Dorsolateral prefrontal cortex (tissue), 120 donors: ENCODE measurements at regions of chr7 and their contacts with region 1.

Region 1: GRCh38 chr7:149662591-149663095 is 110.7 kb downstream of the ZNF467 start:
- DNase-seq: peak; percentile 42 to 79 (median 55)
- H3K4me3 ChIP-seq: no peak overlapping the region
- H3K27ac ChIP-seq: peak overlapping the region in 1 of 59 donors; percentile 18
- H3K27me3 ChIP-seq: no peaks in the 10 kb centered on the region
- CTCF ChIP-seq: peak in 54 of 56 donors; percentile 11 to 81 (median 55)

Region 2: DNA sequence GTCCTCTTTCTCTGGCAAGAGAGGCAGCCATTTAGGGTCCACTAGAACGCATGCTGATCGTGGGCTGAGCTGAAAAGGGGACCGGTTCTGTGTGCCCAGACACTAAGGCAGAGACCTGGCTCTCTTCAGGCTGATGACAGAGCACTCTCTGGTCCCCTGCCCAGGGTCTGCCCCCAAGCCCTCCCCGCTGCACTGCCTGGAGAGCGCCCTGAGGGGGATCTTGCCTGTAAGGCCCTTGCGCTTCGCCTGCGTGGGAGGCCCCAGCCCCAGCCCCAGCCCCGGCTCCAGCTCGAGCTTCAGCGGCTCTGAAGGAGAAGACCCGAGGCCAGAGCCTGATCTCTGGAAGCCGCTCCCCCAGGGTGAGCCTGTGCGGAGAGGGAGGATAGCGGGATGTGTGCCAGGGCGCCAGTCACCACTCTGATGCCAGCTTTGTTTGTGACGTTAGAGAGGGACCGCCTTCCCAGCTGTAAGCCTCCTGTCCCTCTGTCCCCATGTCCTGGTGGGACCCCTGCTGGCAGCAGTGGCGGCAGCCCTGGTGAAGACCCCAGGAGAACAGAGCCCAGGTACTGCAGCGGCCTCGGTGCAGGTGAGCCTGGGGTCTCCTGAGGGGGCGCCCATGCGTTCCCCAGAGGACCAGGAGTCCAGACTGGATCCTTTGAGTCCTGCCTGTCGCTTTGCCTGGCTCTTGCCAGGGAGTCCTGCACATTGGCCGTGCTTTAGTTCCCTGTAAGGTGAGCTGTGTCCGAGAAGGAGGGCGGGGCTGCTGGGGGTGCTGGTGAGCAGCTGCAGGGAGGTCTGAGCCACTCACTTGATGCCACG is 67.5 kb after region 1 on chr7:
- intact Hi-C with region 1: loop called in 1 of 2 experiments (anchors 5 kb)
- DNase-seq: peak in 9 of 10 donors; percentile 59 to 84 (median 67)
- H3K4me3 ChIP-seq: peak overlapping the region in 2 of 59 donors; percentile 13 to 14
- H3K27ac ChIP-seq: peak overlapping the region in 49 of 59 donors; percentile 1 to 85 (median 63)
- H3K27me3 ChIP-seq: no peaks in the 10 kb centered on the region
- CTCF ChIP-seq: peak in 50 of 56 donors; percentile 11 to 82 (median 46)

Region 3: GRCh38 chr7:149741629-149742028 is 79.0 kb after region 1 on chr7:
- intact Hi-C with region 1: loop called in 1 of 2 experiments (anchors 2 kb)
- DNase-seq: peak in 7 of 10 donors; percentile 44 to 67 (median 64)
- H3K4me3 ChIP-seq: peak overlapping the region; percentile 31 to 78 (median 56)
- H3K27ac ChIP-seq: peak overlapping the region in 28 of 59 donors; percentile 2 to 77 (median 36)
- H3K27me3 ChIP-seq: no peaks in the 10 kb centered on the region
- CTCF ChIP-seq: no peak